ENCODE measurements at regions of chr19 and their contacts with region 1.

Region 1: DNA sequence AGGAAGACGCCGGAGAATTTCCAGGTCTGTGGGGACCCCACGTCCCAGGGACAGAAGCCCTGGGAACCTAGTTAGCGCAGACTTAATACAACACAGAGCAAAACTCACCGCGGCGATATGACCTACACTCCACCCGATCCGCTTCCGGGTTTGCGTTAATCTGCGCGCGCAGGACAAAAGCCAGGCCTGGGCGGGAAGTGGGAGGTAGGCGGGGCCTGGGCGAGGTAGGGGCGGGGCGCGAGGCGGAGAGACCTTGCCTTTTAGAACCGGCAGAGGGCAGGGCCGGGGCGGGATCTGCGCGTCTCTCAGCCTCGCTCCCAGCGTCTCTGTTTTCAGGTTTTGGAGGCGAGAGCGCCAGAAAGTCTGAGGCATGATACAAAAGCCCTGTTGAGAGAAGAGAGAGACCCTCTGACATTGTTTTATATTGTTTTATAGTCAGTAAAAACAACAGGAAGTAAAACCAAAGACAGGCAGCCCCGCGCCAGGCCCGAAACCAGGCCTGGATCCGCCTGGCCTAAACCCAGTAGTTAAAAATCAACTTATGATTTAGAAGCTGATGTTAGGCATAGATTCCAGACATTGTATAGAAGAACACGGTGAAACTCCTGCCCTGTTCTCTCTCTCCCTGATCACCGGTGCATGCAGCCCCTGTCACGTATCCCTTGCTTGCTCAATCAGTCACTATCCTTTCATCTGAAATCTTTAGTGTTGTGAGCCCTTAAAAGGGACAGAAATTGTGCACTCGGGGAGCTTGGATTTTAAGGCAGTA is at the start of gene ZNF611:
- DNase-seq: peak; percentile 94
- H3K4me3 ChIP-seq: peak within 1 kb of the TSS; percentile 74 to 85 (median 84)
- H3K27ac ChIP-seq: peak within 1 kb of the TSS; percentile 81
- H3K4me1 ChIP-seq: peaks cover 15% of the 10 kb centered on the region
- H3K27me3 ChIP-seq: no peaks in the 10 kb centered on the region
- CTCF ChIP-seq: peak in 1 of 2 donors; percentile 33
- total RNA-seq, gene ZNF611: 15.0 to 17.6 TPM

Region 2: DNA sequence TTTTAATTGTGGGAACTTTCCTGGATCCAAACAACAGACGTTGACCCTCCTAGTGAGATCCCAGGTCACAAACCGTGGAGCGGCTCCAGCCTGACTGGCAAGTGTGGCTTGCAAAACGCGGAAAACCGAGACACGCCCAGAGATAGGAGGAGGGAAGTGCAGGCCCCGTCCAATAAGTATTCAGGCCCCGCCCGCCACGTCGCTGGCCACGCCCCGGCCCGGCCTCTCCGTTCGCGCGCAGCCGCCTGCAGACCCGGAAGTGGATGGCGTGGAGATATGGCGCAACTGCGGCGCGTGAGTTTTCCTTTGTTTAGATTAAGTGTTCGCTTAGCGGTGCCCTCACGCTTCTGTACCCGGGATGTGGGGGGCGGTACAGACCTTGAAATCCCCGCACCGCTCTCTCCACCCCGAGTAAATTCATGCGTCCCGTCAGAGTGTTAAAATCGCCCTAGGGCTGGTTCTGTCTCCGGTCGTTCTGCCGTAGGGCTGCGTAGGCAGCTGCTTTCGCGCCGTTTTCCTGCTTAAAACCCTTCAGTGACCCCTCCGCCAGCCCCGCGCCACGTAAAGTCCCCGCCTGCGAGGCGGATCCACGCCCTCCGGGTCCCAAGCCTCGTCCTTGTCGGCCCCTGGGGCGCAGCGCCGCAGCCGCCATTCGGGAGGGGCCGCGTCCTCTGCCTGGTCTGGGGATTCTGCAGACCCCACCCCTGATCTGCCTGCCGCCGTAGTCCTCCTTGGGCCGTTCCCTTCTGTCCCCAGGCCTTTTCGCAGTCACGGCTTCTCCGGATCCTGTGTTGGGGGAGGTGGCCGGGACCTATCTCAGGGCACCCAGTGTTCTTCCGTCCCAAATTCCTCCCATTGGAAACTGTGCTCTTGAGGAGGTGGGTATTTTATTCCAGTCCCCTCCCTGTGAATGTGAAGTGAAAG is 465.5 kb before region 1 on chr19 and contains the start of gene ZNF766:
- CTCF ChIA-PET with region 1: no interaction called
- dilution Hi-C with region 1: no loop called
- in situ Hi-C with region 1: loop called (anchors 25 kb)
- intact Hi-C with region 1: no loop called
- DNase-seq: peak; percentile 91
- H3K4me3 ChIP-seq: peak within 1 kb of the TSS; percentile 74 to 85 (median 81)
- H3K27ac ChIP-seq: peak within 1 kb of the TSS; percentile 86
- H3K4me1 ChIP-seq: peaks cover 4% of the 10 kb centered on the region
- H3K27me3 ChIP-seq: no peaks in the 10 kb centered on the region
- CTCF ChIP-seq: no peak
- total RNA-seq, gene ZNF766: 12.0 to 12.3 TPM

Region 3: GRCh38 chr19:52516191-52516590 is 218.9 kb before region 1 on chr19:
- CTCF ChIA-PET with region 1: no interaction called
- dilution Hi-C with region 1: no loop called
- in situ Hi-C with region 1: no loop called
- intact Hi-C with region 1: no loop called
- DNase-seq: no peak
- H3K4me3 ChIP-seq: no peak overlapping the region
- H3K27ac ChIP-seq: no peak overlapping the region
- H3K4me1 ChIP-seq: no peaks in the 10 kb centered on the region
- H3K27me3 ChIP-seq: no peaks in the 10 kb centered on the region
- CTCF ChIP-seq: no peak

Region 4: DNA sequence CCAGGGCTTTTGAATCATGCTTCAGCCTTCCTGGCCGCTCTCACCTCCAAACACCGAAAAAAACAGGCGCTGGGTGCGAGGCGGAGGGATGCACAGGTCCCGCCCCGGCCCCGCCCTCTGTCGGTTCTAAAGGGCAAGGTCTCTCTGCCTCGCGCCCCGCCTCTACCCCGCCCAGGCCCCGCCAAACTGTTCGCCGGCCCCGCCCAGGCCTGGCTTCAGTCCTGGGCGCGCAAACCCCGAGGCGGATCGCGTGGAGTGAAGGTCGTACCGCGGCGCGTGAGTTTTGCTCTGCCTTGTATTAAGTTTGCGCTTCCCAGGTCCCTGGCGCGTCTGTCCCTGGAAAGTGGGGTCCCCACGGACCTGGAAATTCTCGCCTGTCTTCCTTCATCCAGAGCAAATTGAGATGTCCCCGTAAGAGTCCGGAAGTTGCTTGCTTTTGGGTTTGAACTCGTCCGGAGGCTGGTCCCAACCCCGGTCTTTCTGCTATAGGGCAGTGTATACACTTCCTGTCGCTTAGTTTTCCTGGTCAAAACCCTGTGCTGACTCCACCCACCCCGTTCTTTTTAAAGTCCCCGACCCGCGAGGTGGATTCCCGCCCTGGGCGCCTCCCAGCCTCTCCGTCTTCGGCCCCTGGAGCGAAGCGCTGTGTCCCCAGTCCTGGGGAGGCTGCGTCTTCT is 199.2 kb before region 1 on chr19:
- CTCF ChIA-PET with region 1: no interaction called
- dilution Hi-C with region 1: no loop called
- in situ Hi-C with region 1: no loop called
- intact Hi-C with region 1: loop called (anchors 10 kb)
- DNase-seq: peak; percentile 87
- H3K4me3 ChIP-seq: peak overlapping the region; percentile 58 to 61 (median 58)
- H3K27ac ChIP-seq: peak overlapping the region; percentile 50
- H3K4me1 ChIP-seq: peaks cover 5% of the 10 kb centered on the region
- H3K27me3 ChIP-seq: no peaks in the 10 kb centered on the region
- CTCF ChIP-seq: no peak

Region 5: DNA sequence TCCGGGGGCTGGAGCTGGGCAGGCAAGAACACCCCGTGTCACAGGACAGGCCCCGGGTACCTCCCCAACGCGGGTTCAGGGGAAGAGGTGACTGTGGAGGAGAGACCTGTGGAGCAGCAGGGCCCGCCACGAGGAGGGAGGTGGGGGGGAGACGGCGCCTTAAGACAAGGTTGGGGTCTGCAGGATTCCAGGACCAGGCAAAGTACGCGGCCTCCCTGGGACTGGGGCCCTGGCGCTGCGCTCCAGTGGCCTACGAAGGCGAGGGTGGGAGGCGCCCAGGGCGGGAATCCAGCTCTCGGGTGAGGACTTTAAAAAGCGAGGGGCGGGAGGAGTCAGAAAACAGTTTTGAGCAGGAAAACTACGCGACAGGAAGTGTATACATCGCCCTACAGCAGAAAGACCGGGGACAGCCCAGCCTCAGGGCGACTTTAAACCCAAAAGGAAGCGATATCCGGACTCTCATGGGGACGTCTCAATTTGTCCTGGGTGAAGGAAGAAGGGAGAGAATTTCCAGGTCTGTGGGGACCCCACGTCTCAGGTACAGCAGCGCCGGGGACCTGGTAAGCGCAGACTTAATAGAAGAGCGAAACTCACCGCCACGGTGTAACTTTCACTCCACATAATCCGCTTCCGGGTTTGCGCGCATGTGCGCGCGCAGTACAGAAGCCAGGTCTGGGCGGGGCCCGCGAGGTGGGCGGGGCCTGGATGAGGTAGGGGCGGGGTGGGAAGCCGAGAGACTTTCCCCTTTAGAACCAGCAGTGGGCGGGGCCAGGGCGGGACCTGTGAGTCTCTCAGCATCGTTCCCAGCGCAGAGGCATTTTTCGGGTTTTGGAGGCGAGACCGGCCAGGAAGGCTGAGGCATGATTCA is 97.1 kb before region 1 on chr19 and contains the start of gene ZNF83:
- CTCF ChIA-PET with region 1: no interaction called
- dilution Hi-C with region 1: no loop called
- in situ Hi-C with region 1: no loop called
- intact Hi-C with region 1: loop called (anchors 5 kb)
- DNase-seq: peak; percentile 93
- H3K4me3 ChIP-seq: peak within 1 kb of the TSS; percentile 49 to 64 (median 55)
- H3K27ac ChIP-seq: peak within 1 kb of the TSS; percentile 66
- H3K4me1 ChIP-seq: peaks cover 3% of the 10 kb centered on the region
- H3K27me3 ChIP-seq: no peaks in the 10 kb centered on the region
- CTCF ChIP-seq: no peak
- total RNA-seq, gene ZNF83: 54.7 to 59.7 TPM

Region 6: DNA sequence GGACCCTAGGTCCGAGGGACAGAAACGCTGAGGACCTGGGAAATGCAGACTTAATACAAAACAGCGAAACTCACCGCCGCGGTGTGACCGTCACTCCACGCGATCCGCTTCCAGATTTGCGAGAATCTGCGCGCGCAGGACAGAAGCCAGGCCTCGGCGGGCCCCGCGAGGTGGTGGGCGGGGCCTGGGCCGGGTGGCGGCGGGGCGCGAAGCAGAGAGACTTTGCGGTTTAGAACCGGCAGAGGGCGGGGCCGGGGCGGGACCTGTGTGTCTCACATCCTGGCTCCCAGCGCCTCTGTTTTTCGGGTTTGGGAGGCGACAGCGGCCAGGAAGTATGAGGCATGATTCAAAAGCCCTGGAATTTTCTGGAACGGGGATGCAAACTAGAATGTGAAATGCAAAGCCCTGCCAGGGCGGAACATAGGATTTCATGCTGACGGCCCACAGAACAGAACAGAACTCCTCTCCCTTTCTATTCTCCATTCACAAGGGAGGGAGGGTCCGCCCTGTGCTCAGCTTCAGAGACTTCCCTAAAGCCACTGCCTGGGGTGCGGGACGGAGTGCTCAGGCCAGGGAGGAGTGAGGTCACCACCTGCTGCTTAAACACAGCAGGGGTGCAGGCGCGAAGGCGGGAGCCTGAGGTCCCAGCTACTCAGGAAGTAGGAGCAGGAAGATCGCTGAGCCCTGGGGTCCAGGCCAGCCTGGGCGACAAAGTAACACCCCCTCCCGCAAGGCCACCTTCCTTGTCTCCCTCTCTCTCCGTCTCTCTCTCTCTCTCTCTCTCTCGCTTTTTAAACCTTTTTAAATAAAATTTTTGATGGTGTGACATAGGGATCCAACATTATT is 44.5 kb before region 1 on chr19:
- CTCF ChIA-PET with region 1: no interaction called
- dilution Hi-C with region 1: no loop called
- in situ Hi-C with region 1: no loop called
- intact Hi-C with region 1: loop called (anchors 5 kb)
- DNase-seq: peak; percentile 94
- H3K4me3 ChIP-seq: peak overlapping the region; percentile 91 to 98 (median 96)
- H3K27ac ChIP-seq: peak overlapping the region; percentile 80
- H3K4me1 ChIP-seq: peaks cover 6% of the 10 kb centered on the region
- H3K27me3 ChIP-seq: no peaks in the 10 kb centered on the region
- CTCF ChIP-seq: no peak

Region 7: DNA sequence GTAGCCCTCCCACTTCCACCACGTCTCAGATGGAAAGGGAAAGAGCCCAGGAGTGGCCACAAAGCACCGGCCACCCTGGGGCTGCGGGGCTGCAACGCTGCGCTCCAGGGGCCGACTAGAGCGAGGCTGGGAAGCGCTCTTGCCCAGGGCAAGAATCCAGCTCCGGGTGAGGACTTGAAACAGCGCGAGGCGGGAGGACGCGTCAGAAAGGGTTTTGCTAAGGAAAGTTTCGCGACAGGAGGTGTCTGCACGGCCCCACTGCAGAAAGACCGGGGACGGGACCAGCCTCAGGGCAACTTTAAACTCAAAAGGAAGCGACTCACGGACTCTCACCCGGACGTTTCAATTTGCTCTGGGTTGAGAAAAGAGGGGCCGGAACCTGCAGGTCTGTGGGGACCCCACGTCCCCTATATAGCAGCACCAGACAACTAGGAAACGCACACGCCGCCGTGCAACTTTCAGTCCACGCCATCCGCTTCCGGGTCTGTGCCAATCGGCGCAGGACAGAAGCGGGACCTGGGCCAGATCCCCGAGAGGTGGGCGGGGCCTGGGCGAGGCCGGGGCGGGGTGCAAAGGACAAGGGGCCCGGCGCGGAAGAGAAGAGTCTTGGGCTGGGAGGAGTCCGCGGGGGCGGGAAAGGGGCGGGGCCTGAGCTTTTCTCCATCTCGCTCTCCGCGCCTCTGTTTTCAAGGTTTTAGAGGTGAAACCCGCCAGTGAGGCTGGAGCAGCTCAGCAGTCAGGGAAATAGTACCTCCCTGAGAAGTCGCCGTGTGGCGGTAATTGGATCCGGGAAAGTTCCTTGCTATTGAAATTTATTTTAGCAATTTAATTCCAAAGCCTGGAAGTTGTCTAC is 227.5 kb after region 1 on chr19 and contains the start of gene ZNF816:
- CTCF ChIA-PET with region 1: no interaction called
- dilution Hi-C with region 1: no loop called
- in situ Hi-C with region 1: no loop called
- intact Hi-C with region 1: loop called (anchors 5 kb)
- DNase-seq: peak; percentile 95
- H3K4me3 ChIP-seq: peak within 1 kb of the TSS; percentile 65 to 72 (median 71)
- H3K27ac ChIP-seq: peak within 1 kb of the TSS; percentile 50
- H3K4me1 ChIP-seq: peaks cover 8% of the 10 kb centered on the region
- H3K27me3 ChIP-seq: no peaks in the 10 kb centered on the region
- CTCF ChIP-seq: no peak
- total RNA-seq, gene ZNF816: 6.0 to 10.8 TPM

Measured in mammary epithelial cell (primary cell).